Sigmoid colon (tissue), 7 donors: ENCODE measurements at regions of chr1 and their contacts with region 1.

Region 1: DNA sequence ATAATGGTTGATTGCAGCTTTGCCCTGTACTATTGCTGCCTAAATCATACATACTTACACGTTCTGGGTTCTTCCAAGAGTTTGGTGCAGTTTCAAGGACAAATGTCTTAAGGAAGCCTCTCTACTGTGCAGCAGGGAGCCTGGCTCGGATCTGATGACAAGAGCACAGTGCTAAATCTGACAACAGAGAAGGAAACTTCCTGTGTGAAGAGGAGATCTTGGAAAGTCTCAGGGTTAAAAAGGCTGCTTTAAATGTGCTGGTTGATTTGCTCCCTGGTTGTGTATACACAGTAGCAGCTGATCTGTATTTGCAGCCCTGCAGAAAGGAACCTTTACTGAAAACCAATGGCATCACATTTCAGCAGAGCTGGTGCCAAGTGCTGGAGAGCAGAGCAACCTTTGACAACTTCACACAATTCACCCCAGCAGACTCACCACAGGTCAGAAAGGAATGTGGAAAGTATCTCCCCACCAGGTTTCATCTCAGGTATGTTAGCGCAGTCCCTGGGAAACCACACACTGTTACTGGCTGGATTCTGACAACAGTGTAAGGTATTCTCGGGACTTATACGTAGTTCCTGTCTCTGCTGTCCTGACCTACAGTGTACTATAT is 355.0 kb upstream of the ESRRG start:
- DNase-seq: no peak
- H3K4me3 ChIP-seq: peak overlapping the region in 3 of 4 donors; percentile 9 to 19 (median 18)
- H3K27ac ChIP-seq: peak overlapping the region; percentile 45 to 71 (median 54)
- H3K4me1 ChIP-seq: peaks cover 0 to 32% (median 26%) of the 10 kb centered on the region in 4 donors
- H3K27me3 ChIP-seq: no peaks in the 10 kb centered on the region
- CTCF ChIP-seq: no peak
- EP300 ChIP-seq: no peak
- POLR2A ChIP-seq: no peak

Region 2: GRCh38 chr1:216600730-216601609 is 477.2 kb before region 1 on chr1:
- intact Hi-C with region 1: loop called (anchors 10 kb)
- DNase-seq: peak; percentile 87
- H3K4me3 ChIP-seq: peak overlapping the region; percentile 56 to 76 (median 65)
- H3K27ac ChIP-seq: peak overlapping the region; percentile 91 to 96 (median 93)
- H3K4me1 ChIP-seq: peaks cover 0 to 9% (median 0%) of the 10 kb centered on the region in 4 donors
- H3K27me3 ChIP-seq: no peaks in the 10 kb centered on the region
- CTCF ChIP-seq: peak in 3 of 4 experiments; percentile 24 to 60 (median 36)
- EP300 ChIP-seq: no peak
- POLR2A ChIP-seq: no peak

Region 3: DNA sequence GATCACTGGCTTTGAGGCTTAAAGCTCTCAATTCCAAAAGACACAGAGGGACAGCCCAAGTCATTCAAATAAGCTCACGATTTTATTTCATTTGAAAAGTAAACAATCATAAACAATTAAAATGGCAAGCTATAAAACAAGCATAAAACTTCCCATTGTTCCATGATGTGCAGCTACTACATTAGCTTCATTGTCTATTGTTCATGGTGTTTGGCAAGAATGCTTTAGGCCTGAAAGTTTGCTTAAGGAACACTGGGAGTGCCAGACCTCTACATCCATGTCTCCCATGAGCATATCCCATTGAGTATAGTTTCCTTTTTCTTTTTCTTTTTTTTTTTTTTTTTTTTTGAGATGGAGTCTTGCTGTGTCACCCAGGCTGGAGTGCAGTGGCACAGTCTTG is 68.8 kb before region 1 on chr1:
- intact Hi-C with region 1: no loop called
- DNase-seq: no peak
- H3K4me3 ChIP-seq: no peak overlapping the region
- H3K27ac ChIP-seq: no peak overlapping the region
- H3K4me1 ChIP-seq: no peaks in the 10 kb centered on the region
- H3K27me3 ChIP-seq: no peaks in the 10 kb centered on the region
- CTCF ChIP-seq: no peak
- EP300 ChIP-seq: no peak
- POLR2A ChIP-seq: no peak

Region 4: DNA sequence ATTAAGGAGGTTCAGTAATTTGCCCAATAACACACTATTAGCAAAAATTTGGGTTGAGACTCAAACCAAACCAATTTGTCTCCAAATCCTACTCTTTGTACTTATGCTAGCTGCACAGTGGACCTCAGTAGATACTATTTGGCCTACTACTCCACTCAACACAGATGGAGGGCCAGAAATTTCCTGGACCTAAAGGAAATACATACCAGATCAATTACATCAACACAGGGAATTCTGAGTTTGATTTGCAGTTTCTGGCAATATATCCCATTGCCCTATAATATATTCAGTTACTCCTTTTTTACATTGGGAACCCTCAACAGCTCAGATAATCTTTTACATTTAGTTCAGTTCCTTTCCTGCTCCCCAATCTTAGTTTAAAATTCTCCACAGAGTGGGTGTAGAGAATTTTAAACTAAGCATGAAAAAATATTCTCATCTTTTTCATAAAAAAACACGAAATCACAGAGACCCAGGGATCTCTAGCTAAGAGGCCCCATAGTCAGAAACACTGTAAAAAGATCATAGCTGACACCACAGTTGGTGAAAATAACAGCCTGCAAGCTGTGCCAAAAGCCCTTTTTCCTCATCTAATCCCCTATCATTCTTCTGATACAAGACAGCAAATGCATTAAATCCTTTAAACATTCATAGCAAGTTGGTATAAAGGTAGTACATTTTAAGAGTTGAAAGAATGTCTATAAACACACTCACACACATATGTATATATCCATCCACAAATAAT is 37.3 kb before region 1 on chr1:
- intact Hi-C with region 1: no loop called
- DNase-seq: no peak
- H3K4me3 ChIP-seq: no peak overlapping the region
- H3K27ac ChIP-seq: no peak overlapping the region
- H3K4me1 ChIP-seq: no peaks in the 10 kb centered on the region
- H3K27me3 ChIP-seq: no peaks in the 10 kb centered on the region
- CTCF ChIP-seq: no peak
- EP300 ChIP-seq: no peak
- POLR2A ChIP-seq: no peak